Tibial artery (tissue), 4 donors: ENCODE measurements at regions of chr17 and their contacts with region 1.

Region 1: DNA sequence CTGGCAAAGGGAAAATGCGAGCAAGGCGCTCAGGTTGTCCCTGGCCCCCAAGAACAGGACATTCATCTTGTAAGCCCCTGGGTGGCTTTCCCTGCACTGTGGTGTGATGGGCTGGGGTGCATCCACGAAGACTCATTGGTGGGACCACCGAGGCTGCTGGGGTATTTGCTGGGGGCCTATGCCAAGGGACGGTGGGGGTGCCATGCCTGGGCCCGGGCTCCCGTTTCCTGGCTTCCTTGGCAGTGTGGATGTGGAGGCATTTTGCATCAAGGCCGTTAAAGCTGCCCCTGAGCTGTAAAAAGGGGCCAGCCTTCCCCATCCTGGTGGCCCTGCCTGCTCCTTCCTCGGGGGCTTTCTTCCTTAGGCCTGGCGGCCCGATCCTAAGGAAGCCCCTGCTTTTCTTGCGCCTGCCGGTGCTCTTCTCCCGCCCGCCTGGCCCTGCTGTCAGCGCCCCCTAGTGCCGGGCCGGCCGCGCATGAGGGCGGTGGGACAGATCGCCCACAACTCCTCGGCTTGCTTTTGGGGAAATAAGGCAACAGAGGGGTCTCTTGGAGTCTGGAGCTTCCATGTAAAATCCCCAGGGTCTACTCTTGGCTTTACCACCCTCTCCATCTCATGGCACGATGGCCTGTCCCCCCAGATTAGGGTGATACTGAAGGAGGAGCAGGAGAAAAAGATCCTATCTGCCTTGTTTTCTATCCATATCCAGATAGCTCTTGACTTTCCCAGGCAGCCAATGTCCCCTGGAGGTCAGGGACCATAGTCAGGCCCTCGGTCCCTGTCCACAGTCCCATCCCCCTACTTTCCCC is 9.8 kb upstream of the TBX2 start:
- DNase-seq: no peak
- H3K4me3 ChIP-seq: peak overlapping the region; percentile 28 to 44
- H3K27ac ChIP-seq: peak overlapping the region; percentile 48 to 51
- H3K4me1 ChIP-seq: peaks cover 0 to 25% (median 10%) of the 10 kb centered on the region in 4 donors
- H3K27me3 ChIP-seq: no peaks in the 10 kb centered on the region
- CTCF ChIP-seq: peak; percentile 86 to 87

Region 2: DNA sequence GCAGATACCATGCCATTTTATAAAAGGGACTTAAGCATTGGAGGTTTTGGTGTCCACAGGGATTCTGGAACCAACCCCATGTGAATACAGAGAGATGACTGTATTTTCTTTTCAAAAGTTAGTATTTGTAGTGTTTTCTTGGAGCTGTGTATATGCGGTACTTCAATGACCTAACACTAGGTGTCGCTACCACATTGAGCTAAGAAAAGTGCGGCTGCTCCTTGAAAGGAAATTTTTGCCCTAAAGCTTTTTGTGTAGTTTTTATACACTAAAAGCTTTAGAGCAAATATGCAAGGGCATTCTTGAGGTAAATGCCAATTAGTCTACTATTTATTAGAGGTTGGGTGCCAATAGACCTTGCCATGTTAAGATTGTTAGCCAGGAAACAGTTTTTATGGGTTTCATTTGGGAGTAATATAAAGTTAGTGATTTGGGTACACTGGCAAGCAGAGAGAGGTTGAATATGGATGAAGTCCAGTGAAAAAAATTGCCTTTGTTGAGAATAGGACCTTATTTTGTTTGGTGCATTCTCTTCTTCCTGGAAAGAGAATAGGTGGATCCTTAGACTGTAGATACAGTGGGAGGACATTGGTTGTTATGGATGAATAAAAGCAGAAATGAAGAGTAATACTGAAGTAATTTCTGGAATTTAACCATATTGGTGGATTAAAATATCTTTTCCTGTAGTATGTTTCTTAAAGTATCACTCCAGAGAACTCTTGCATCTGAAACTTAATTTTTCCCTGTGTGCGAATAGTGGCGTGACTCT is 668.9 kb before region 1 on chr17:
- intact Hi-C with region 1: loop called (anchors 10 kb)
- DNase-seq: no peak
- H3K4me3 ChIP-seq: no peak overlapping the region
- H3K27ac ChIP-seq: no peak overlapping the region
- H3K4me1 ChIP-seq: peaks cover 0 to 8% (median 2%) of the 10 kb centered on the region in 4 donors
- H3K27me3 ChIP-seq: no peaks in the 10 kb centered on the region
- CTCF ChIP-seq: peak; percentile 80 to 89

Region 3: GRCh38 chr17:61002316-61002736 is 387.5 kb before region 1 on chr17:
- intact Hi-C with region 1: loop called (anchors 5 kb)
- DNase-seq: no peak
- H3K4me3 ChIP-seq: no peak overlapping the region
- H3K27ac ChIP-seq: no peak overlapping the region
- H3K4me1 ChIP-seq: peaks cover 0 to 10% (median 0%) of the 10 kb centered on the region in 4 donors
- H3K27me3 ChIP-seq: no peaks in the 10 kb centered on the region
- CTCF ChIP-seq: peak; percentile 56 to 58